CD14-positive monocyte (primary cell): ENCODE measurements at regions of chr3 and their contacts with region 1.

Region 1: GRCh38 chr3:124887177-124887931 is at the start of gene ITGB5:
- DNase-seq: peak in 2 of 3 donors; percentile 23 to 24
- H3K4me3 ChIP-seq: peak within 1 kb of the TSS; percentile 33 to 82 (median 55)
- H3K4me3 Mint-ChIP-seq: peak within 1 kb of the TSS; percentile 76 to 91
- H3K27ac ChIP-seq: no peak within 1 kb of the TSS
- H3K27ac Mint-ChIP-seq: no peak within 1 kb of the TSS
- H3K4me1 ChIP-seq: peaks cover 6 to 15% of the 10 kb centered on the region in 2 donors
- H3K4me1 Mint-ChIP-seq: peaks cover 18% of the 10 kb centered on the region
- H3K27me3 ChIP-seq: peaks cover 33 to 50% of the 10 kb centered on the region in 2 donors
- H3K27me3 Mint-ChIP-seq: peaks cover 48 to 66% (median 62%) of the 10 kb centered on the region in 3 donors
- CTCF ChIP-seq: no peak
- polyA plus RNA-seq, gene ITGB5: 0.68 to 1.2 (median 1.0) TPM

Region 2: DNA sequence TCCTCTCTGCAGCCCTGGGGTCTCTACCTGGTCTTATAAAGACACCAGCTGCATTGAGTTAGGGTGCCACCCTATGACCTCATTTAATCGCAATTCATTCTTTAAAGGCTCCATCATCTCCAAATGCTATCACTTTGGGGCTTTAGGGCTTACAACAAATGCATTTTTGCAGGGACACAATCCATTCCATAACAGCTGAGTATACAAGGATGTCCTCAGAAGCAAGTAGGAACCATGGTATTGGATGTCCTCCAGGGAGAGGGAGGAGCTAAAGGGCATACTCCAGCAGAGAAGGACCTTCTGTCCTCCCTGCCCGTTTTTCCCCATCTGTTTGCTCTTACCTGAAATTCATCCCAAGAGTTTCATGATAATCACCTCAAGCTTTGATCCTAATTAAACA is 126.8 kb before region 1 on chr3:
- intact Hi-C with region 1: no loop called
- DNase-seq: no peak
- H3K4me3 ChIP-seq: no peak overlapping the region
- H3K4me3 Mint-ChIP-seq: no peak overlapping the region
- H3K27ac ChIP-seq: no peak overlapping the region
- H3K27ac Mint-ChIP-seq: no peak overlapping the region
- H3K4me1 ChIP-seq: peaks cover 3 to 7% of the 10 kb centered on the region in 2 donors
- H3K4me1 Mint-ChIP-seq: peaks cover 5% of the 10 kb centered on the region
- H3K27me3 ChIP-seq: no peaks in the 10 kb centered on the region
- H3K27me3 Mint-ChIP-seq: peaks cover 1 to 4% (median 2%) of the 10 kb centered on the region in 3 donors
- CTCF ChIP-seq: no peak

Region 3: DNA sequence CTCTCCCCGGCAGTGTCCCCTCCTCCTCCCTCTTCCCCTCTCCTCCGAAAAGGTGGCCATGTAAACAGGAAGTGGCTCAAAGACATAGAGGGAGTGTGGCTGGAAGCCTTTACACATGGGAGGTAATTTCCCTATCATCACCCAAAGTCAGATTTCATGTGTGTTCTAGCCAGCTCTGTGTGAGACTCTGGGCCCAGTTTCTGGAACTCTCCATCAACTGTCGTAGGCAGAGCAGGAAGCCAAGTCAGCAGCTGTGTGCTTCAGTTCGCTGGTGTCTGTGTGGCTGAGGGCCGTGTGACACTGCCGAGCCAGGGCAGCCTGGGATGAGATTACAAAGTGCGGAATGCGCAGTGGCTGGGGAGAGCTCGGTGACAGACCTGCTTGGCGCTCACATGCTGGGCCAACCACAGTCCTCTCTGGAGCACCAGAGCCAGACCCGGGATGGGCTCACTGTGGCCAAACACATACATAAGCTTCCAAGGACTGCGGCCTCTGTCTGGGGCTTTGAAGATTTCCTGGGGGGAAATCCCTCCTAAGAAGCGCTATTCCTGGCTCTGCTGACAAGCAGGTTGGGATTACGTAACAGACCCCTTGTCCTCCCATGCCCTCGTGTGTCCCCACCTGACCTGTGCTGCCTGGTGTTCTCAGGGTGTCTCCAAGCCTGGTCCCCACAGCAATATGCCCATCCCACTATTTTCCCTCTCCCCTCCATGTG is 106.4 kb before region 1 on chr3:
- intact Hi-C with region 1: loop called in 1 of 2 experiments (anchors 5 kb)
- DNase-seq: peak in 1 of 3 donors; percentile 12
- H3K4me3 ChIP-seq: no peak overlapping the region
- H3K4me3 Mint-ChIP-seq: peak overlapping the region in 1 of 2 donors; percentile 78
- H3K27ac ChIP-seq: no peak overlapping the region
- H3K27ac Mint-ChIP-seq: peak overlapping the region in 1 of 7 donors; percentile 26
- H3K4me1 ChIP-seq: peaks cover 23 to 24% of the 10 kb centered on the region in 2 donors
- H3K4me1 Mint-ChIP-seq: peaks cover 37% of the 10 kb centered on the region
- H3K27me3 ChIP-seq: no peaks in the 10 kb centered on the region
- H3K27me3 Mint-ChIP-seq: peaks cover 4 to 18% (median 4%) of the 10 kb centered on the region in 3 donors
- CTCF ChIP-seq: no peak

Region 4: GRCh38 chr3:124826703-124827102 is 60.7 kb before region 1 on chr3:
- intact Hi-C with region 1: loop called in 1 of 2 experiments (anchors 5 kb)
- DNase-seq: no peak
- H3K4me3 ChIP-seq: no peak overlapping the region
- H3K4me3 Mint-ChIP-seq: no peak overlapping the region
- H3K27ac ChIP-seq: no peak overlapping the region
- H3K27ac Mint-ChIP-seq: no peak overlapping the region
- H3K4me1 ChIP-seq: peaks cover 19 to 22% of the 10 kb centered on the region in 2 donors
- H3K4me1 Mint-ChIP-seq: peaks cover 23% of the 10 kb centered on the region
- H3K27me3 ChIP-seq: no peaks in the 10 kb centered on the region
- H3K27me3 Mint-ChIP-seq: peaks cover 2 to 6% (median 5%) of the 10 kb centered on the region in 3 donors
- CTCF ChIP-seq: no peak

Region 5: DNA sequence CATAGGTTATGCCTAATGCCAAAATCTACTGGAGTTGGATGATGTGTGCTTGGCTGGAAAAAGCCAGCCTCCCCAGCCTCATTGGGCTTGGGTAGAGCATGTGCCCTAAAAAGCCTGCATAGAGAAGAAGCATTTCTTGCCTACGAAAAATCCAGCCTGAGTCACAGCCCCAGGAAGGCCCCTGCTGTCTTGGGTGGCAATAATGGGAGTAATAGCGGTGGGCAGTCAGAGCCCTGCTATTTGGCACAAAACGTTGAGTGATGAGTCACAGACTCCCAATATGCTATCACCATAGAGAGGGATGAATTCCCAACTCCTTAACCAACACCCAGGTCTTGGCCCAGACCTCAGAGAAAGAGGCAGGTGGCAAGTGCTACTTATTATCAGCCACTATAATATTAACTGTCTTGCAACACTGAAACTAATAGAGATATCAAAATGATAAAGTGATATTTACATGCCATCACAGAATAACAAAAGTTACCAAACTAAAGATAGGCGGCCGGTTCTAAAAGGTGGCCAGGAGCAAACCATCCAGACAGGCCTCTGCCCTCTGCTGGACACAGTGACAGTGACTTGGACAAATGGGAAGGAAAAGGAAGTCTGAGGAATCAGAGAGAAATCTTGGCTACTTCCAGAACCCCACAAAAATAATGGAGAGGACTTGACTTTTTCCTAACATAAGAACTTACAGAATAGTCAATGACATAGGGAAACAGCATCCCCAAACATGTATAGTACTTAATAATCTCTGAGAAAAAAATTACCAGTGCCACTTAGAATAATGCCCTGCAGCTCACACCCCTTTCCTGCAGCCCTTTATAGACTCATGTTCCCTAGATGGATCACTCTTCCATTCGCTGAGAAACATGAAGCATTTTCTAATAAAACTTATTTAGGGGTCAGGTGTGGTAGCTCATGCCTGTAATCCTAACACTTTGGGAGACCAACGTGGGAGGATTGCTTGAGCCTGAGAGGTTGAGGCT is 99.1 kb after region 1 on chr3:
- intact Hi-C with region 1: no loop called
- DNase-seq: peak in 1 of 3 donors; percentile 45
- H3K4me3 ChIP-seq: peak overlapping the region in 1 of 3 experiments; percentile 51
- H3K4me3 Mint-ChIP-seq: no peak overlapping the region
- H3K27ac ChIP-seq: peak overlapping the region; percentile 41 to 72
- H3K27ac Mint-ChIP-seq: peak overlapping the region in 5 of 7 donors; percentile 33 to 93 (median 66)
- H3K4me1 ChIP-seq: peaks cover 41 to 43% of the 10 kb centered on the region in 2 donors
- H3K4me1 Mint-ChIP-seq: peaks cover 45% of the 10 kb centered on the region
- H3K27me3 ChIP-seq: no peaks in the 10 kb centered on the region
- H3K27me3 Mint-ChIP-seq: no peaks in the 10 kb centered on the region
- CTCF ChIP-seq: peak; percentile 27